PC-9 (cell line): ENCODE measurements at regions of chr6 and their contacts with region 1.

Region 1: DNA sequence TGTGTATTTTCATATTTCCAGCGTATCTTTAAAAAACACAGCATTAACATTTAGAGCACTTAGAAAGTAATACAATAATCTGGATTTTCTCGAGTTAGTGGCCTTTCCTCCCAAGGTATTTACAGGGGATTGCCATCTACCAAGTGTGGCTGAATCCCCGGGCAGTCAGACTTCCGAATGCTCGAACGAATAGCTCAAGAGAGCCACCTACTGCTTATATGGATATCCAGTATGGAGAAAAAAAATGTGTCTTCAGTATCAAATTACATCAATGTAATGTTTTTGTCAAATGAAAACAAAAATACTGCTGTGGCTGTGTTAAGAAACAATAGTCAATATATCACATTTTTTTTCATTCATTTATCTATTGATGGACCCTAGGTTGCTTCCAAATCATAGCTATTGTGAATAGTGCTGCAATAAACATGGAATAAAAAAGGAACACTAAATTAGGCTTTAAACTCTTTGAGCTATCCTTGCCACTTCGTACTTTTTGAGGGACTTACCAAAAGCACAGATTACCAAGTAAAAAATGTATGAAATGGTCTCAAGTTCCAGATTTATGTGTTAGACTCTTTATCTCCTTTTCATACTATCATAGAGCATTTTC is 654.5 kb upstream of the PTCHD4 start:
- DNase-seq: peak; percentile 25 to 39
- H3K4me3 ChIP-seq: no peak overlapping the region
- H3K27ac ChIP-seq: peak overlapping the region; percentile 18; the same call in 1 of the 2 replicates
- H3K4me1 ChIP-seq: peaks cover 17% of the 10 kb centered on the region
- H3K27me3 ChIP-seq: no peaks in the 10 kb centered on the region
- CTCF ChIP-seq: peak; percentile 69

Region 2: GRCh38 chr6:47787620-47788497 is 977.6 kb before region 1 on chr6:
- CTCF ChIA-PET with region 1: no interaction called
- POLR2A ChIA-PET with region 1: no interaction called
- intact Hi-C with region 1: loop called (anchors 1 kb)
- DNase-seq: peak; percentile 43 to 51
- H3K4me3 ChIP-seq: no peak overlapping the region
- H3K27ac ChIP-seq: no peak overlapping the region
- H3K4me1 ChIP-seq: no peaks in the 10 kb centered on the region
- H3K27me3 ChIP-seq: no peaks in the 10 kb centered on the region
- CTCF ChIP-seq: peak; percentile 96

Region 3: GRCh38 chr6:48087448-48087847 is 678.0 kb before region 1 on chr6:
- CTCF ChIA-PET with region 1: interaction called, 3 read pairs
- POLR2A ChIA-PET with region 1: no interaction called
- intact Hi-C with region 1: loop called (anchors 2 kb)
- DNase-seq: no peak
- H3K4me3 ChIP-seq: no peak overlapping the region
- H3K27ac ChIP-seq: no peak overlapping the region
- H3K4me1 ChIP-seq: no peaks in the 10 kb centered on the region
- H3K27me3 ChIP-seq: no peaks in the 10 kb centered on the region
- CTCF ChIP-seq: peak; percentile 63

Region 4: GRCh38 chr6:48151142-48151541 is 614.3 kb before region 1 on chr6:
- CTCF ChIA-PET with region 1: no interaction called
- POLR2A ChIA-PET with region 1: no interaction called
- intact Hi-C with region 1: loop called (anchors 2 kb)
- DNase-seq: peak in 1 of 2 experiments; percentile 63
- H3K4me3 ChIP-seq: no peak overlapping the region
- H3K27ac ChIP-seq: peak overlapping the region; percentile 28; the same call in 1 of the 2 replicates
- H3K4me1 ChIP-seq: no peaks in the 10 kb centered on the region; the same call in 1 of the 2 replicates
- H3K27me3 ChIP-seq: no peaks in the 10 kb centered on the region
- CTCF ChIP-seq: no peak

Region 5: DNA sequence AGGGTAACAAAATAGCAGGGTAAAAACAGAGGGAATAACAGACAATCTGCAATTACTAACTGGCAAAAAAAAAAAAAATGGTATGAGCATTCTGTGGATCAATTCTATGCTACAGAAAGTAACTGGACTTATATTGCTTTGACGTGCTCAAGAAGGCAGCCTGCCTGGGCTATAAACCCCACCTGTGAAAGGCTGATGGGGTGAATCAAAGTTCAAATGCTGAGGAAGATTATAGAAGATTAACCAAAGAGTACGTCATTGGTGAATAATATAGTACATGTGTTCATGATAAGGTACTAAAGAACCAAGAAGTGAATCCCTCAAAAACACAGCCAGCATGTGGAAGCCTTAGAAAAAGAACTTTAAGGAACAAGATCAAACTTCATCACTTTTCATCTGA is 212.6 kb before region 1 on chr6:
- CTCF ChIA-PET with region 1: no interaction called
- POLR2A ChIA-PET with region 1: no interaction called
- intact Hi-C with region 1: no loop called
- DNase-seq: no peak
- H3K4me3 ChIP-seq: no peak overlapping the region
- H3K27ac ChIP-seq: no peak overlapping the region
- H3K4me1 ChIP-seq: no peaks in the 10 kb centered on the region
- H3K27me3 ChIP-seq: no peaks in the 10 kb centered on the region
- CTCF ChIP-seq: no peak

Region 6: DNA sequence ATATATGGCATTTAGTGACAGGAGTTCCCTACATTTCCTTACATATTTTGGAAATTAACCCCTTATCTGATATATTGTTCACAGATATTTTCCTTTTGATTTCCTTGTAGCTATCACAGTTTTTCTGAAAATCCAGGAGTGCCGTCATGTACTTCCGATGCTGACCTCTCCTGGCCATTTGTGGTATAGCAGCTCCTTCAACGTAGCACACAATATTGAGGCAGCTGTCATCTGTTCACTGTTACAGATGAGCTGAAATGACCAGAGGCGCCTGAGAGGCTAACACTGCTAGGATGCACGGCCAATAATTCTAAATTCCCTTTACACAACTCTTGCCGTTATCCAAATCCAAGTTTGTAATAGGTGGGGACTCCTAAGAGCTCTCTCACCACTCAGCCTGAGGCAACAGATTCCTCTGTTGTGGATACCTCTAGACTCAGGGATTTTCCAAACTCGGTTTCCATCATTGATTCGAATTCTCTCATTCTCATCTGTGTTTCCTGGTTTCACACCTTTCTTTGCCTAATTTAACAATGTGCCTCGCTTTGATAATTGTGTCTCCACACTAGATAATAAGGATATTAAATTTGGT is 644.6 kb after region 1 on chr6:
- CTCF ChIA-PET with region 1: interaction called, 3 read pairs
- POLR2A ChIA-PET with region 1: no interaction called
- intact Hi-C with region 1: loop called (anchors 5 kb)
- DNase-seq: peak in 1 of 2 experiments; percentile 64
- H3K4me3 ChIP-seq: no peak overlapping the region
- H3K27ac ChIP-seq: no peak overlapping the region
- H3K4me1 ChIP-seq: peaks cover 5% of the 10 kb centered on the region; the same call in 1 of the 2 replicates
- H3K27me3 ChIP-seq: no peaks in the 10 kb centered on the region
- CTCF ChIP-seq: peak; percentile 93